Aorta (tissue), 5 donors: ENCODE measurements at regions of chr5 and their contacts with region 1.

Region 1: DNA sequence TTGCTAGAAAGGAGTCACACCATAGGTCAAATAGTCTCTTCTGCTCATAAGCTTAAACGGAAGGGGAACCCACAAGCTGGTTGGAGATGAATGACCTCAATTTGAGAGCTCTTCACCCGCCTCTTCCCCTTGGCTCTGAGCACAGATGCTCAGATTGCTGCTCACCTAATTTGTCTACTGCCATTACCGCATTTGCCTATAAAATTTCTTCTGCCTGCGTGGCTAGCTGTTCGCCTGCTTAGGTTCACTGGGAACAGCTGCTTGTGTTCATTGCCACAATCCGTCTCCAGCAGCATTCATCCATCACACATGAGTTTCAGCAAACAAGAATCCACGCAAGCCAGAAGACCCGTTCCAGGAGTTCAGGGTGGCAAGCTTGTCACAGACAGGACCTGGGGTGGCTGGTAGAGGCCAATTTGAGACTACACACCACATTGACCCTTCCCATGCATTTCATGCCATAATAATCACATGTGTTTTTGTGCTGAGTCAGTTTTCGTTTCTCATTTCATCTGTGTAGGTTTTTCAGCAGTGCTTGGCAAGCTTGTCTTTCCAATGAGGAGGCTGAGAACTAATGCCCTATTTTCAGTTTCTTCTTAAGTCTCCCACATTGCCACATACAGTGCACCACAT is 50.2 kb upstream of the DNAH5 start:
- DNase-seq: no peak
- ATAC-seq: no peak
- H3K4me3 ChIP-seq: no peak overlapping the region
- H3K27ac ChIP-seq: no peak overlapping the region
- H3K4me1 ChIP-seq: no peaks in the 10 kb centered on the region
- H3K27me3 ChIP-seq: no peaks in the 10 kb centered on the region

Region 2: GRCh38 chr5:13783726-13784125 is 211.0 kb before region 1 on chr5:
- intact Hi-C with region 1: no loop called
- DNase-seq: no peak
- ATAC-seq: no peak
- H3K4me3 ChIP-seq: no peak overlapping the region
- H3K27ac ChIP-seq: no peak overlapping the region
- H3K4me1 ChIP-seq: no peaks in the 10 kb centered on the region
- H3K27me3 ChIP-seq: no peaks in the 10 kb centered on the region

Region 3: DNA sequence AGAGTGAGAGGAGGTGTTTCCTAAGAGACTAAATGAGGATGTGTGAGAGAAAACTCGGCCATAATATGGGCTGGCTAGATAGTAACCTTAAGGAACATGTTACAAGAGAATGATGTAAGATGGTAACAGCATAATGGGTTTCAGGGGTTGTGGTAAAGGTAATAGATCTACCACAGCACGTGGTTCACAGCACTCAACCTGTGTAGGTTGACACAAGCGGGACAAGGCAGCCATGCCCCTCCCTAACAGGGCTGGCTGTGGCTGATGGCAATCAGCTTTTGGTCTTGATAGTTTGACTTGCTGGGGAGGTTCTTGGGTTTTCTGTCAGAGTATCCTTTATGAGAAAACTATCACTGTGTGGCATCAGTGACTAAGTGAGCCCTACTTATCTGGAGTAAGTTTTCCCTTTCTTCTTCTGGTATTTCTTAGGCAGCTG is 287.0 kb after region 1 on chr5:
- intact Hi-C with region 1: loop called in 1 of 2 experiments (anchors 5 kb)
- DNase-seq: no peak
- ATAC-seq: no peak
- H3K4me3 ChIP-seq: no peak overlapping the region
- H3K27ac ChIP-seq: no peak overlapping the region
- H3K4me1 ChIP-seq: peaks cover 3 to 15% of the 10 kb centered on the region in 2 donors
- H3K27me3 ChIP-seq: no peaks in the 10 kb centered on the region

Region 4: GRCh38 chr5:14342306-14342705 is 347.6 kb after region 1 on chr5:
- intact Hi-C with region 1: loop called in 1 of 2 experiments (anchors 10 kb)
- DNase-seq: no peak
- ATAC-seq: no peak
- H3K4me3 ChIP-seq: no peak overlapping the region
- H3K27ac ChIP-seq: no peak overlapping the region
- H3K4me1 ChIP-seq: peaks cover 0 to 3% of the 10 kb centered on the region in 2 donors
- H3K27me3 ChIP-seq: no peaks in the 10 kb centered on the region